Left colon (tissue), 2 donors: ENCODE measurements at regions of chr7 and their contacts with region 1.

Region 1: DNA sequence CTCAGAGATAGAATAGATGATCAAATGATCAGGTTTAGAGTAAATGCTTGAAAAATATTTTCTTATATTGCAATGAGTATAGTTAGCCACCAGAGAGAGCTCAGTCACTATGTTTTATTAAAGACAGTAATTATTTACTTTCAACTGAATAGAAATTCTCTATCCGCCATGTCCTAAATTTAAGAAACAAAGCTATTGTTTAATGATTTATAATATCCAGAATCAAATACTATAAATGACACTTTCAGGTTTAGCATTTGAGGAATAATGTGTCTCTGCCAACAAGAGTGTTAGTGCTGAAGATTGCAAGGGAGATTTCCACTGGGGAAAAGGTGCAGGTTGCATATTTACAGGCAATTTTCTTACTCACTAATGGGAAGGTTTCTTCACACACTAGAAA is 184.7 kb downstream of the DGKB start:
- DNase-seq: no peak
- ATAC-seq: no peak

Region 2: GRCh38 chr7:15015545-15016326 is 297.9 kb after region 1 on chr7:
- intact Hi-C with region 1: loop called in 1 of 2 experiments (anchors 5 kb)
- DNase-seq: peak in 1 of 2 donors; percentile 7
- ATAC-seq: peak; percentile 94